ENCODE measurements at regions of chr7 and their contacts with region 1.

Region 1: GRCh38 chr7:33757562-33758165 is 147.7 kb upstream of the BMPER start:
- DNase-seq: no peak
- ATAC-seq: peak; percentile 46; the same call in 1 of the 2 replicates
- H3K4me3 ChIP-seq: no peak overlapping the region
- H3K27ac ChIP-seq: no peak overlapping the region
- H3K4me1 ChIP-seq: no peaks in the 10 kb centered on the region
- H3K27me3 ChIP-seq: 0 out of 2 replicates have a peak, but pooled peaks cover 3% of the 10 kb centered on the region
- CTCF ChIP-seq: peak; percentile 44 to 64 (median 53); a peak in 5 of 6 replicates
- POLR2A ChIP-seq: no peak
- RAD21 ChIP-seq: peak; percentile 54

Region 2: DNA sequence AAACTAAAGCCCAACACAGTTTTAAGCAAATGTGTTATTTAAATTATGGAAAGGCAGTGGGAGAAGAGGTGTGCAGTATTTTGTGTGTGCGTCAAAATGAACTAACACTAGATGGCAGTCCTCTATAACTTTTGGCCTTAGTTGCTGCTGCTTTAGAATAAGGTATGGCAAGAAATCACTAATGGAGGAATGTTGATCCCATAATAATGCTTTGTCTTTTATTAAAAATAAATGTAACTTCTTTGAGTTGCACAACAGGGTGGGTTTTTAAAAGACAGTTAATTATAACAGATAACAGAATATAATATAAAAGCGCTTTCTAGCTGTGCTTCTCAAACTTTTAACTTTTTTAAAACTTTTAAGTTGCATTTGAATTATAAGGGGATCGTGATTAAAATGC is 571.9 kb before region 1 on chr7:
- CTCF ChIA-PET with region 1: no interaction called
- POLR2A ChIA-PET with region 1: no interaction called
- RAD21 ChIA-PET with region 1: no interaction called
- intact Hi-C with region 1: loop called (anchors 10 kb)
- DNase-seq: peak; percentile 34
- ATAC-seq: peak; percentile 91
- H3K4me3 ChIP-seq: no peak overlapping the region
- H3K27ac ChIP-seq: no peak overlapping the region
- H3K4me1 ChIP-seq: no peaks in the 10 kb centered on the region
- H3K27me3 ChIP-seq: no peaks in the 10 kb centered on the region
- CTCF ChIP-seq: peak; percentile 49 to 81 (median 65); a peak in 5 of 6 replicates
- POLR2A ChIP-seq: no peak
- RAD21 ChIP-seq: peak; percentile 88

Region 3: GRCh38 chr7:33733870-33734650 is 23.6 kb before region 1 on chr7:
- CTCF ChIA-PET with region 1: no interaction called
- POLR2A ChIA-PET with region 1: no interaction called
- RAD21 ChIA-PET with region 1: no interaction called
- intact Hi-C with region 1: no loop called
- DNase-seq: no peak
- ATAC-seq: no peak
- H3K4me3 ChIP-seq: no peak overlapping the region
- H3K27ac ChIP-seq: no peak overlapping the region
- H3K4me1 ChIP-seq: no peaks in the 10 kb centered on the region
- H3K27me3 ChIP-seq: no peaks in the 10 kb centered on the region
- CTCF ChIP-seq: no peak
- POLR2A ChIP-seq: no peak
- RAD21 ChIP-seq: no peak

Region 4: DNA sequence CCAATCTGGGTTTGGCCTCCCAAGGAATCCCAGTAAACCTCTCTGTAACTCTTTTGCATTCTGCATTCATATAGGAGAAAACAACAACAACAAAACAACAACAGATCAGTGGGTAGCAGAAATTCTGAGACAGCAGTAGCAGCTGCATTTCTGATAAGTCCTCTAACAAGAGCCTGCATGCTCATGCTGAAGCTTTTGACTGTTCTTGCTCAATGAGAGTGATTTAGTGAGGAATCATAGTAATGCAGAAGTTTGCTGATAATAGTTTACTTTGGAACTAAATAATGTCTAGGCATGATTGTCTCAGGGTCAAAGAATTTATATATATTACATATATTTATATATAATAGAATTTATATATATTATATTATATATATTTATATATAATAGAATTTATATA is 182.8 kb after region 1 on chr7:
- CTCF ChIA-PET with region 1: no interaction called
- POLR2A ChIA-PET with region 1: no interaction called
- RAD21 ChIA-PET with region 1: no interaction called
- intact Hi-C with region 1: no loop called
- DNase-seq: no peak
- ATAC-seq: no peak
- H3K4me3 ChIP-seq: no peak overlapping the region
- H3K27ac ChIP-seq: no peak overlapping the region
- H3K4me1 ChIP-seq: no peaks in the 10 kb centered on the region
- H3K27me3 ChIP-seq: no peaks in the 10 kb centered on the region
- CTCF ChIP-seq: no peak
- POLR2A ChIP-seq: no peak
- RAD21 ChIP-seq: no peak

Measured in HCT116 (cell line).